ENCODE measurements at regions of chr7 and their contacts with region 1.

Region 1: DNA sequence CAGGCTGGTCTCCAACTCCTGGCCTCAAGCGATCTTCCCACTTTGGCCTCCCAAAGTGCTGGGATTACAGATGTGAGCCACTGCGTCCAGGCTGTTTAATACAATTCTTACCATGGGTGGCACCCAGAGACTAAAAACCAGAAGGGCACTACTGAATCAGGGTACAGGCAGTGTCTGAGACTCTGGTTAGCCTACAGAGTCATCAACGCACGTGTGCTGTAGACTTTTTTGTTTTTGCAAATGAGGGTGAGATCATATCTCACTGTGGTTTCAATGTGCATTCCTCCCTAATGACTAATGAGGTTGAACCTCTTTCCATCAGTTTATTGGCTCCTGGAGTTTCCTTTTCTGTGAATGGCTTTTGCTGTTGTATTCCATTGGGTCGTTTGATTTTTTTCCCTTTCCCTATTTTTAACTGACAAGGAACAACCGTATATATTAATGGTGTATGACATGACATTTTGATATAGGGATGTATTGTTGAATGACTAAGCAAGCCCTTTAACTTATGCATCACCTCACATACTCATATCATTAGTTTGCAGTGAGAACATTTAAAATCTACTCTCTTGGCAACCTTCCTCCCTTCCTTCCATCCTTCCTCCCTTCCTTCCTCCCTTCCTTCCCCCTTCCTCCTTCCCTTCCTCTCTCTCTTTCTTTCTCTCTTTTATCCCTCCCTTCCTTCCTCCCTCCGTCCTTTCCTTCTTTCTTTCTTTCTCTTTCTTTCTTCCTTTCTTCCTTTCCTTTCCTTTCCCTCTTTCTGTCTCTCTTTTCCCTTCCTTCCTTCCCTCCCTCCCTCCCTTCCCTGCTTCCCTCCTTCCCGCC is 9.3 kb upstream of the METTL27 start:
- DNase-seq: peak; percentile 61 to 84 (median 72)
- ATAC-seq: peak; percentile 89
- H3K4me3 ChIP-seq: no peak overlapping the region
- H3K27ac ChIP-seq: peak overlapping the region; percentile 28; the same call in 1 of the 3 replicates
- H3K4me1 ChIP-seq: peaks cover 32 to 38% of the 10 kb centered on the region in 2 experiments
- H3K27me3 ChIP-seq: peaks cover 0 to 7% of the 10 kb centered on the region in 2 experiments; a peak in 1 of 5 replicates
- CTCF ChIP-seq: no peak
- EP300 ChIP-seq: peak; percentile 65
- POLR2A ChIP-seq: no peak
- RAD21 ChIP-seq: no peak

Region 2: GRCh38 chr7:73606801-73607691 is 244.6 kb before region 1 on chr7:
- CTCF ChIA-PET with region 1: interaction called, 8 read pairs
- POLR2A ChIA-PET with region 1: no interaction called
- in situ Hi-C with region 1: loop called (anchors 5 kb)
- intact Hi-C with region 1: loop called (anchors 5 kb)
- DNase-seq: peak; percentile 78 to 89 (median 88)
- ATAC-seq: peak; percentile 85
- H3K4me3 ChIP-seq: no peak overlapping the region
- H3K27ac ChIP-seq: no peak overlapping the region
- H3K4me1 ChIP-seq: peaks cover 0 to 30% of the 10 kb centered on the region in 2 experiments; a peak in 2 of 5 replicates
- H3K27me3 ChIP-seq: no peaks in the 10 kb centered on the region
- CTCF ChIP-seq: peak; percentile 93 to 98 (median 97)
- EP300 ChIP-seq: no peak
- POLR2A ChIP-seq: no peak
- RAD21 ChIP-seq: peak; percentile 86 to 95

Region 3: GRCh38 chr7:73612598-73613269 is 238.9 kb before region 1 on chr7:
- CTCF ChIA-PET with region 1: interaction called, 6 read pairs
- POLR2A ChIA-PET with region 1: no interaction called
- in situ Hi-C with region 1: loop called (anchors 5 kb)
- intact Hi-C with region 1: loop called (anchors 5 kb)
- DNase-seq: peak; percentile 73 to 94 (median 82)
- ATAC-seq: peak; percentile 85
- H3K4me3 ChIP-seq: no peak overlapping the region
- H3K27ac ChIP-seq: peak overlapping the region; percentile 8; the same call in 1 of the 3 replicates
- H3K4me1 ChIP-seq: peaks cover 22 to 30% of the 10 kb centered on the region in 2 experiments
- H3K27me3 ChIP-seq: no peaks in the 10 kb centered on the region
- CTCF ChIP-seq: peak; percentile 50 to 71 (median 70)
- EP300 ChIP-seq: peak; percentile 88
- POLR2A ChIP-seq: no peak
- RAD21 ChIP-seq: peak; percentile 78 to 81

Region 4: DNA sequence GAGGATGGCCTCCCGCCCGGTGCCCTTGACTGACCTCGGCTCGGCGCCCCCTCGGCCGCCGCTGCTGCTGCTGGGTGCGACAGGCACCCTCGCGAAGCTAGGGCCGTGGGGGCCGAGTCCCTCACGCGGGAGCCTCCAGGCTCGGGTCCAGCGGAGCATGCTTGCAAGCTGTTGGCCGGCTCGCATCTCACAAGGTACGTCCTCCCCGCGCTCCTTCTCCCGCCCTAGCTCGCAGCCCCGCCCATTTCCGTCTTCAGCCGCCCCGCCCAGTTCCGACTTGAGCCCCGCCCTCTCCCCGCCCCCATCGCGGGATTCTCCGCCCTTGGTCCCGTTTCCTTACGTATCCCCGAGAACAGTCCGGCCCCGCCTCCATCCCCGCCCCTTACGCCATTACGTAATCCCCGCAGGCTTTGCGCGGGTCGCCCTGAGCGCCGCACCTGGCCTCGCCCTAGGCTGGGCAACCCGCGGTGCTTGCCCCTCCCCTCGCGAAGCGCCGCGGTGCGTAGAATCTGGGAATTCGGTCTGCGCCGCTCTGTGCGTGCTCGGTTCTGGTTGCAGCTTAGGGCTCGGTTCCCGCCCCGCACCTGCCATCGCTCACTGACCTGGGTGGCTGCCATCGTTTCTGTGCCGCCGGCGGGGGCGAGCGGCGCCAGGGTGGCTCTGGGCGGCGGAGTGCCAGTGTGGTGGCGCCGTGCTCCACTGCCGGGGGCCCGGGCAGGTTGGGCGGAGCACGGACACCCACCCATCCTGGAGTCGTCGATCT is 112.8 kb before region 1 on chr7 and contains the start of gene ABHD11:
- CTCF ChIA-PET with region 1: no interaction called
- POLR2A ChIA-PET with region 1: interaction called, 3 read pairs
- in situ Hi-C with region 1: loop called (anchors 5 kb)
- intact Hi-C with region 1: loop called (anchors 2 kb)
- DNase-seq: peak; percentile 99
- ATAC-seq: peak; percentile 90
- H3K4me3 ChIP-seq: peak within 1 kb of the TSS; percentile 62
- H3K27ac ChIP-seq: peak within 1 kb of the TSS; percentile 91
- H3K4me1 ChIP-seq: peaks cover 2 to 58% of the 10 kb centered on the region in 2 experiments; a peak in 4 of 5 replicates
- H3K27me3 ChIP-seq: no peaks in the 10 kb centered on the region
- CTCF ChIP-seq: peak in 1 of 3 experiments; percentile 12; a peak in 1 of 6 replicates
- EP300 ChIP-seq: no peak
- POLR2A ChIP-seq: peak; percentile 93
- RAD21 ChIP-seq: peak; percentile 21 to 28; a peak in 3 of 4 replicates
- polyA plus RNA-seq, gene ABHD11: 7.7 to 8.6 TPM

Region 5: DNA sequence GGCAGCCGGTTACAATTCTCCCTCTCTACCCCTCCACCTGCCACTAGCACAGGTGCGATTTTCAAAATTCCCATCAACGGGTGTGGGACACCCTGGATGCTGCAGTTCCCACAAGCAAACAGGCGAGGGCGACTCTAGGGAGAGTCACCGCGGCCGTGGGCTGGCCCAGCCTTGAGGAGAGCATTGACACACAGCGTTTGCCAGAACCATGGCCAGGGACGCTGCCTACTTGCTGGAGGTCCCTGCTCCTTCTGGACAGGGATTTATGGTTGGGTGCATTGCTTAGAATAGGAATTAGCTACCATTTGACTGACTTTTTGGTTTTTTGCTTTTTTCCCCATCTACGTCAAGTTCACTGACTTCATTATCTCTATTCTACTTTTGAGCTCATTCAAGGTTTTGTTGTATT is 39.9 kb before region 1 on chr7:
- CTCF ChIA-PET with region 1: interaction called, 19 read pairs
- POLR2A ChIA-PET with region 1: interaction called, 5 read pairs
- in situ Hi-C with region 1: no loop called
- intact Hi-C with region 1: loop called (anchors 1 kb)
- DNase-seq: peak; percentile 80 to 86 (median 82)
- ATAC-seq: peak; percentile 99
- H3K4me3 ChIP-seq: no peak overlapping the region
- H3K27ac ChIP-seq: no peak overlapping the region
- H3K4me1 ChIP-seq: peaks cover 0 to 10% of the 10 kb centered on the region in 2 experiments; a peak in 2 of 5 replicates
- H3K27me3 ChIP-seq: no peaks in the 10 kb centered on the region
- CTCF ChIP-seq: peak; percentile 93 to 94 (median 94)
- EP300 ChIP-seq: no peak
- POLR2A ChIP-seq: no peak
- RAD21 ChIP-seq: peak; percentile 58 to 88

Region 6: GRCh38 chr7:73827567-73828106 is 24.0 kb before region 1 on chr7:
- CTCF ChIA-PET with region 1: interaction called, 8 read pairs
- POLR2A ChIA-PET with region 1: interaction called, 5 read pairs
- in situ Hi-C with region 1: no loop called
- intact Hi-C with region 1: loop called (anchors 2 kb)
- DNase-seq: peak in 3 of 4 experiments; percentile 45 to 67 (median 63)
- ATAC-seq: peak; percentile 20
- H3K4me3 ChIP-seq: no peak overlapping the region
- H3K27ac ChIP-seq: no peak overlapping the region
- H3K4me1 ChIP-seq: peaks cover 23 to 46% of the 10 kb centered on the region in 2 experiments
- H3K27me3 ChIP-seq: no peaks in the 10 kb centered on the region
- CTCF ChIP-seq: no peak
- EP300 ChIP-seq: no peak
- POLR2A ChIP-seq: no peak
- RAD21 ChIP-seq: no peak